Breast epithelium (tissue), 4 donors: ENCODE measurements at regions of chr7 and their contacts with region 1.

Region 1: DNA sequence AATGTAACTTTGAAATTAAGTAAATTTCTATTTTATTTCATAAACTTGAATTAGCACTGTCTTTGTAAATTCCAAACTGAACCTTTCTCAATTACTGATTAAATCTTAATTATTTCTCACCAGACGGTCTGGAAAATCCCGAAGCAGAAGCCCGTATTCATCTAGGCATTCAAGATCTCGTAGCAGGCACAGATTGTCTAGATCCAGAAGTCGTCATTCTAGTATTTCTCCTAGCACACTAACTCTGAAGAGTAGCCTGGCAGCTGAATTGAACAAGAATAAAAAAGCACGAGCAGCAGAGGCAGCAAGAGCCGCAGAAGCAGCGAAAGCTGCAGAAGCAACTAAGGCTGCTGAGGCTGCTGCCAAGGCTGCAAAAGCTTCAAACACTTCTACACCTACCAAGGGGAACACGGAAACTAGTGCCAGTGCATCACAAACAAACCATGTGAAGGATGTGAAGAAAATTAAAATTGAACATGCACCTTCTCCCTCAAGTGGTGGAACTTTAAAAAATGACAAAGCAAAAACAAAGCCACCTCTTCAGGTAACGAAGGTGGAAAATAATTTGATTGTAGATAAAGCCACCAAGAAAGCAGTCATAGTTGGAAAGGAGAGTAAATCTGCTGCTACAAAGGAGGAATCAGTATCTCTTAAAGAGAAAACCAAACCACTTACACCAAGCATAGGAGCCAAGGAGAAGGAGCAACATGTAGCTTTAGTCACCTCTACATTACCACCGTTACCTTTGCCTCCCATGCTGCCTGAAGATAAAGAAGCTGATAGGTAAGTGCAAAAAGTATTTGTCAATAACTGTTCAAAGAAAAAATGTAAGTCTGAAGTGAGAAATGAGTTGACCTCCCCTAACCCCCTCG is 37.7 kb downstream of the CDK13 start:
- DNase-seq: no peak
- H3K4me3 ChIP-seq: no peak overlapping the region
- H3K27ac ChIP-seq: no peak overlapping the region
- H3K4me1 ChIP-seq: no peaks in the 10 kb centered on the region
- H3K27me3 ChIP-seq: no peaks in the 10 kb centered on the region
- CTCF ChIP-seq: no peak
- POLR2A ChIP-seq: no peak

Region 2: GRCh38 chr7:39971924-39972323 is 15.8 kb before region 1 on chr7:
- intact Hi-C with region 1: no loop called
- DNase-seq: no peak
- H3K4me3 ChIP-seq: no peak overlapping the region
- H3K27ac ChIP-seq: no peak overlapping the region
- H3K4me1 ChIP-seq: no peaks in the 10 kb centered on the region
- H3K27me3 ChIP-seq: no peaks in the 10 kb centered on the region
- CTCF ChIP-seq: no peak
- POLR2A ChIP-seq: no peak

Region 3: DNA sequence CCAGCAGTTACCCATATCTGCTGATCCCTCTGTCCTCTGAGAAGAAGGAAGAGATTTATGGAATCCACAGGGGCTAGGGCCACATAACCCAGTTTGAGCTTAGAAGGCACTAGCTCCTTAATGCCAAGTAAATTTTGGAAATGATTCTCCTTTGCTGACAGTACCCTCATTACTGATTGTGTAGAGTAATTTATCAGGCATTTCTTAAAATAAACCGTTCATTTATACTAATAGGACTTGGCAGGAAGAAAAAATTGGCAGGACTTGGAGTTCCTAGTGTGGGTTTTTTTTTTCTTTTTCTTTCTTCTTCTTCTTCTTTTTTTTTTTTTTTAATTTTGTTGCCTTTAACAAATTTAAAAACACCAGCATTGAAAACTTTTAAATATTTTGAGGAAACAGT is 792.7 kb after region 1 on chr7:
- intact Hi-C with region 1: no loop called
- DNase-seq: no peak
- H3K4me3 ChIP-seq: no peak overlapping the region
- H3K27ac ChIP-seq: no peak overlapping the region
- H3K4me1 ChIP-seq: peaks cover 0 to 6% of the 10 kb centered on the region in 2 donors
- H3K27me3 ChIP-seq: no peaks in the 10 kb centered on the region
- CTCF ChIP-seq: no peak
- POLR2A ChIP-seq: no peak

Region 4: GRCh38 chr7:41205600-41205999 is 1217.9 kb after region 1 on chr7:
- intact Hi-C with region 1: loop called (anchors 10 kb)
- DNase-seq: no peak
- H3K4me3 ChIP-seq: no peak overlapping the region
- H3K27ac ChIP-seq: no peak overlapping the region
- H3K4me1 ChIP-seq: no peaks in the 10 kb centered on the region
- H3K27me3 ChIP-seq: no peaks in the 10 kb centered on the region
- CTCF ChIP-seq: no peak
- POLR2A ChIP-seq: no peak